Ovary (tissue), 10 donors: ENCODE measurements at regions of chr10 and their contacts with region 1.

Region 1: DNA sequence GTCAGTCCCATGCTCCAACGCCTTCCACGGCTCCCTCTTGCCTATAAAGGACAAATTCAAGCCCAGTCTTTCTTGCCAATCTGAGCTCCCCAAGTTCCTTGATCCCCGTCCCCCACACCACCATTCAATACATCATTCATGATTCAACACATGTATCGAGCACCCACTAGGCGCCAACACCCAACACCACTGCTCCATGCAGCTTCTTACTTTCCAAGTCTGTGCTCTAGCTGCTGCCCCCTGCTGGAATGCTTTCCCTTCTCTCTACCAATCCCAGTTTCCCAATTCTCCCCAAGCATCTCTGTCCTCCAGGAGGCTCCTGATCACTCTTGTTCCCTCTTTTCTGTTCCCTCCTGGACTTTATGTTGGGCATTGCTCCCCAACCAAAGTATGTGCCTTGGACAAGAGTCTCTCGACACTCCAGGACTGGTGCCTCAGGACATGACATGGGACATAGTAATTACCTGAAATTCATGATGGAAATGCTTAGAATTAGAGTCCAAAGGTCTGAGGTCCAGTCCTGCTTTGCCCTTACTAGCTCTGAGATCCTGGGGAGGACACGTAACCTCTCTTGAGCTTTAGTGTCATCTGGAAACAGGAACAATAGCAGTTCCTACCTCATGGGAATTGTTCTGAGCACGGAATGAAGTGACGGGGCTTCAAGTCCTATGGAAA is 172.7 kb downstream of the NEURL1 start:
- DNase-seq: peak in 1 of 5 donors; percentile 55
- H3K4me3 ChIP-seq: no peak overlapping the region
- H3K27ac ChIP-seq: peak overlapping the region in 1 of 2 donors; percentile 53
- H3K4me1 ChIP-seq: peaks cover 25% of the 10 kb centered on the region
- H3K27me3 ChIP-seq: no peaks in the 10 kb centered on the region
- CTCF ChIP-seq: no peak
- EP300 ChIP-seq: no peak
- POLR2A ChIP-seq: no peak

Region 2: DNA sequence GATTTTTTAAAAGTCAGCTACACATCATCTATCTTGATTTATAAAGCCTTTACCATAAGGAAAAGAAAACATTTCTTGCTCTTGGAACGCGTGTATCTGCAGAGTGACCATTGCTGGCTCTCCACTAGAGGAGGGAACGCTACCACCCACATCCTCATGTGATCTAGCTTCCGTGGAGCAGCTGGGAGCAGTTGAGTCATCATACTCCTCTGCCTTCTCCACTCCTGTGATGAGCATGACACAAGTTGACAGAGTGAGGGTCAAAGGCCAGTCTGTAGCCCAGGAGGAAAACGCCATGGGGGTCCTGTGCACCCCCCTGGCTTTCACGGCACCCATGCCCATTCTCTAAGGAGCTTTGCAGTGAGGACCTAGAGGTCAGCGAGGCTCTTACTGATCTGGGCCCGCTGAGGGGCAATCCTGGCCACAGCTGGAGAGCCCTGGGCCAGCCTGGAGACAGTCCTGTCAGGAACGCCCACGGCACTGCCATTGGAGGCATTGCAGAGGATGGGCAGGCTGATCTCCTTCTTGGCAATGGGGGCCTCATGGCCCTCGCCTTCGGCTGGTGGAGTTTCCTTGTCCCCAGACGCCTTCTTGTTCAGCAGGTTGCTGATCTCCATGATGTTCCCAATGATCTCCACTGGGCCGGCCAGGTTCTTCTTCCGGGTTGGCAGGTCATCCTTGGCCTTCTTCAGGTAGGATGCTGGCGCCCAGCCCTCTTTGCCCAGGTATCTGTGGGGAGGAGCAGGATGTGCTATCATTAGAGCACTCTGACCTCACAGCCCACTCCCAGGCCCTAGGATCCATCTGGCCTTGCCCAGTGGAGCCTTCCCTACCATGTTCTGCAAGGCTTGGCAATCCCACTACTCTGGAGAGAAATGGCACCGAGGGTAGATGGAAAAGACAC is 53.5 kb before region 1 on chr10:
- intact Hi-C with region 1: loop called in 2 of 4 experiments (anchors 5 to 10 kb)
- DNase-seq: peak in 1 of 5 donors; percentile 46
- H3K4me3 ChIP-seq: no peak overlapping the region
- H3K27ac ChIP-seq: peak overlapping the region in 1 of 2 donors; percentile 14
- H3K4me1 ChIP-seq: peaks cover 29% of the 10 kb centered on the region
- H3K27me3 ChIP-seq: no peaks in the 10 kb centered on the region
- CTCF ChIP-seq: no peak
- EP300 ChIP-seq: no peak
- POLR2A ChIP-seq: no peak